MCF 10A (cell line): ENCODE measurements at regions of chr15 and their contacts with region 1.

Region 1: DNA sequence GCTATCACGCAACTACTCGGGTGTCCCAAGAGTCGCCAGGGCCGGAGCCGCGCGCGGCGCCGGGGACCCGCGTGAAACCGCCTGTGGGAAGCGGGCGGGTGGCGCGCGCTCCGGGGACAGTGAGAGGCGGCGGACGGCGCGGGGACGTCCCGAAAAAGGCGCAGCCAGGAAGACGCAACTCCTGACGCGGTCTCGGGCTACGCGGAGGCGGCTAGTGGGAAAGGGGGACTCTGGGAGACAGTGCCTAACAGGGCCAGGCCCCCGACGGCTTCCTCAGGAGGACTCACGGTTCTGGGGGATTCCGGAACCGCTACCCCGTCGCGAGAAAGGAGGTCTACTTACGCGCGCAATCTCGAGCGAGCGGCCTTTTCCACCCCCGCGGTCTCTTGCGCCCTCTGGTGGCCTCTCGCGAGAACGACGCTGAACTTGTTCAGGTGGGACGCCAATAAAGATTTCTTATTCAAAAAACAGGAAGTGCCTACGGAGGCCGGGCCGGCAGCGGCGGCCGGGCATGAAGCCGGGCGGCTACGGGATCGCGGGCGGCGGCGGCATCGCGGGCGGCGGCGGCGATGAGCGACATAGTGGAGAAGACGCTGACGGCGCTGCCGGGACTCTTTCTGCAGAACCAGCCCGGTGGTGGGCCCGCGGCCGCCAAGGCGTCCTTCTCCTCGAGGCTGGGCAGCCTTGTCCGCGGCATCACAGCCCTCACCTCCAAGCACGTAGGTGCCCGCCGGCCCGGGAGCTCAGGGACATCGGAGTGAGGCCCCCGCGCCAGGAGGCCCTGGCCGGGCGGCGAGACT is at the start of gene AP4E1:
- DNase-seq: peak; percentile 91
- H3K4me3 Mint-ChIP-seq: peak within 1 kb of the TSS; percentile 81
- H3K27ac Mint-ChIP-seq: peak within 1 kb of the TSS; percentile 81
- H3K4me1 Mint-ChIP-seq: no peaks in the 10 kb centered on the region
- H3K27me3 Mint-ChIP-seq: no peaks in the 10 kb centered on the region
- CTCF ChIP-seq: peak; percentile 97
- total RNA-seq, gene AP4E1: 25.5 and 28.2 TPM in 2 replicates

Region 2: GRCh38 chr15:50813877-50814276 is 94.5 kb before region 1 on chr15:
- CTCF ChIA-PET with region 1: no interaction called
- POLR2A ChIA-PET with region 1: no interaction called
- intact Hi-C with region 1: no loop called
- DNase-seq: no peak
- H3K4me3 Mint-ChIP-seq: no peak overlapping the region
- H3K27ac Mint-ChIP-seq: no peak overlapping the region
- H3K4me1 Mint-ChIP-seq: peaks cover 12% of the 10 kb centered on the region
- H3K27me3 Mint-ChIP-seq: no peaks in the 10 kb centered on the region
- CTCF ChIP-seq: no peak

Region 3: GRCh38 chr15:50876989-50877360 is 31.4 kb before region 1 on chr15:
- CTCF ChIA-PET with region 1: interaction called, 6 read pairs
- POLR2A ChIA-PET with region 1: interaction called, 97 read pairs
- intact Hi-C with region 1: loop called (anchors 1 kb)
- DNase-seq: peak; percentile 90
- H3K4me3 Mint-ChIP-seq: peak overlapping the region; percentile 49
- H3K27ac Mint-ChIP-seq: peak overlapping the region; percentile 52
- H3K4me1 Mint-ChIP-seq: peaks cover 26% of the 10 kb centered on the region
- H3K27me3 Mint-ChIP-seq: peaks cover 13% of the 10 kb centered on the region
- CTCF ChIP-seq: peak; percentile 95

Region 4: GRCh38 chr15:50883903-50884302 is 24.5 kb before region 1 on chr15:
- CTCF ChIA-PET with region 1: interaction called, 6 read pairs
- POLR2A ChIA-PET with region 1: interaction called, 97 read pairs
- intact Hi-C with region 1: no loop called
- DNase-seq: peak; percentile 89
- H3K4me3 Mint-ChIP-seq: peak overlapping the region; percentile 74
- H3K27ac Mint-ChIP-seq: peak overlapping the region; percentile 96
- H3K4me1 Mint-ChIP-seq: peaks cover 57% of the 10 kb centered on the region
- H3K27me3 Mint-ChIP-seq: no peaks in the 10 kb centered on the region
- CTCF ChIP-seq: no peak